Activated CD8-positive, alpha-beta T cell treated with anti-CD3 and anti-CD28 coated beads for 36 hours (primary cell): ENCODE measurements at regions of chr14 and their contacts with region 1.

Region 1: DNA sequence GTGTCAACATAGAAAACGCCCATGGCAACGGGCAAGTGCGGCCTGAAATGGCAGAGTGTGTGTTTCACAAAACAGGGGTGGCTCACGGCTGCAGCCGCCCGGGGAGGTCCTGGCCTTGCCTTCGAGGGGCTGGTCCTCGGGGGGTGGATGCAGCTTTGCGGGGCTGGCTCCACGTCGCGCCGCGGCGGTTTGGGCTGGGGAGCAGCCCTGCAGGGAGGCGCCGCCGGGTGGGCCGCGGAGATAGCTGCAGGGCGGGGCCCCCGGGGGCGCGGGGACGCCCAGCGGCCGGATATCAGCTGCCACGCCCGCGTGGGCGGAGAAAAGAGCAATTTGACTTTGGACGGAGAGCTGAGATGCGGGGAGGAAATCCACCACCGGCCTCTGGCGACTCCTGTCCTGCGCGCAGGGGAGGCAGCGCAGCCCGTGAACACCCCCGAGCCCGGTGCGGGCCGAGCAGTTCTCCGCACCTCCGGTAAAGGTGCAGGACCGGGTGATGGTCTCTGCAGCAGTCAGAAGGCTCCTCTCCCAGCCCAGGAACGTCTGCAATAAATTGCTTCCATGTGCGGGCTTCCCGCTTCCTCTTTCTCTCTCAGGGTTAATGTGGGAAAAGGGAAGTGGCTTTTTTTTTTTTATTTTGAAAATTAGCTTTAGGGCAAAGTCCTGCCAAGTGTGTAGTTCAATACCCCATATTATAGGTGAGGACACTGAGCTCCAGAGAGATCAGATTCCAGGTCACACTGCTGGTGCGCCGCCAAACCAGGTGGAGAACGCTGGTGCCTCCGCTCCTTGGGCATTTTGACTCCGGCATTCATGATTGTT is 110.5 kb downstream of the ARF6 start:
- DNase-seq: peak; percentile 92
- ATAC-seq: peak; percentile 10
- H3K4me3 Mint-ChIP-seq: peak overlapping the region; percentile 72
- H3K27ac Mint-ChIP-seq: peak overlapping the region; percentile 94
- H3K4me1 Mint-ChIP-seq: peaks cover 35% of the 10 kb centered on the region
- H3K27me3 Mint-ChIP-seq: no peaks in the 10 kb centered on the region
- CTCF ChIP-seq: no peak

Region 2: GRCh38 chr14:49867831-49868723 is 135.3 kb before region 1 on chr14:
- CTCF ChIA-PET with region 1: interaction called, 58 read pairs
- POLR2A ChIA-PET with region 1: interaction called, 42 read pairs
- intact Hi-C with region 1: loop called (anchors 10 kb)
- DNase-seq: peak; percentile 100
- ATAC-seq: peak; percentile 86
- H3K4me3 Mint-ChIP-seq: peak overlapping the region; percentile 97
- H3K27ac Mint-ChIP-seq: peak overlapping the region; percentile 98
- H3K4me1 Mint-ChIP-seq: peaks cover 28% of the 10 kb centered on the region
- H3K27me3 Mint-ChIP-seq: no peaks in the 10 kb centered on the region
- CTCF ChIP-seq: no peak

Region 3: DNA sequence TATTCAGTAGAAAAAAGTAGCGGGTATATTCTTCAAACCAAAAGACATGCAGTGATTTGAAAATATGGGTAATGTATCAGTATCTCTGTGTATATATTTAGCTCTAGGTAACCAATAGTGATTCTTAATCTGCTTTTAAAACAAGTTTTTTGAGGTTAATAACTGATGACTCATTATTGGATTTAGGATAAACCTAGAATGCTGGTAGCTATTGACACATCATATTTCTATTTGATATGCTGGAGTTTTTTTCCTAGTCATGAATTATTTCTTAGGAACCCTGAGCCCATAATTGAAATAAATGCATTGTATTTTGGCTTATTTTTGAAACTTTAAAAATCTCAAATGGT is 95.0 kb before region 1 on chr14:
- CTCF ChIA-PET with region 1: interaction called, 3 read pairs
- POLR2A ChIA-PET with region 1: interaction called, 18 read pairs
- intact Hi-C with region 1: no loop called
- DNase-seq: no peak
- ATAC-seq: no peak
- H3K4me3 Mint-ChIP-seq: no peak overlapping the region
- H3K27ac Mint-ChIP-seq: peak overlapping the region; percentile 88
- H3K4me1 Mint-ChIP-seq: peaks cover 43% of the 10 kb centered on the region
- H3K27me3 Mint-ChIP-seq: no peaks in the 10 kb centered on the region
- CTCF ChIP-seq: no peak

Region 4: DNA sequence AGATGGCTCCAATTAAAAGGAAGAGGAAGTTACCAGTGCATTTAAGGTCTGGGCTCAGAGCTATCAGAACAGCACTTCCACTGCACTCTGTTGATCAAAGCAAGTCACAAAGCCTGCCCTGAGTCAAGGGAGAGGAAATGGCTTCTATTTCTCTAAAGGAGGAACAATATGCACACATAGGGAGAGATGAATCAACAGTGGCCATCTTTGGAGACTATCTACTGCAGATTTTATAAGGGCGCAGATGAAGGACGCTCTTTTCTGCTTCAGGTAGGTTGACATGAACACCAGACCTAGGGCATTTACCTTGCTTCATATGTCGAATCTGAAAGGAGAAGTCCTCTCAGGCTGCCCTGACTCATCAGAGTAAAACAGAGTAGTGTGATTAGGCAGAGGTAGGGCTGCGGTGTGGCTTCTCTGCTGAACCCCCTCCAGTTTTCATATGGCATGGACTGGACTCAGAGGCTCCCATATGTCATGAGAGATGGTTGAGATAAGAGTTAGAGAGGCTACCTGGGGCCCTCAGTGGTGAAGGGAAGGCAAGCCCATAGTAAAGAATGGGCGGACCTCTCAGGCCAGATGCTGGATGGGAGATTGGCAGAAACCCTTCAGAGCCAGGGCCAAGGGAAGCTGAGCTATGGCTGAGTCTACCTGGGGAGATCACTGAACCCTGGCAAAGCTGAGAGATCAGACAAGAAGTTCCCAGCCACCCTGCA is 26.1 kb before region 1 on chr14:
- CTCF ChIA-PET with region 1: interaction called, 37 read pairs
- POLR2A ChIA-PET with region 1: interaction called, 135 read pairs
- intact Hi-C with region 1: loop called (anchors 1 kb)
- DNase-seq: peak; percentile 69
- ATAC-seq: peak; percentile 76
- H3K4me3 Mint-ChIP-seq: peak overlapping the region; percentile 35
- H3K27ac Mint-ChIP-seq: peak overlapping the region; percentile 91
- H3K4me1 Mint-ChIP-seq: peaks cover 84% of the 10 kb centered on the region
- H3K27me3 Mint-ChIP-seq: no peaks in the 10 kb centered on the region
- CTCF ChIP-seq: no peak

Region 5: DNA sequence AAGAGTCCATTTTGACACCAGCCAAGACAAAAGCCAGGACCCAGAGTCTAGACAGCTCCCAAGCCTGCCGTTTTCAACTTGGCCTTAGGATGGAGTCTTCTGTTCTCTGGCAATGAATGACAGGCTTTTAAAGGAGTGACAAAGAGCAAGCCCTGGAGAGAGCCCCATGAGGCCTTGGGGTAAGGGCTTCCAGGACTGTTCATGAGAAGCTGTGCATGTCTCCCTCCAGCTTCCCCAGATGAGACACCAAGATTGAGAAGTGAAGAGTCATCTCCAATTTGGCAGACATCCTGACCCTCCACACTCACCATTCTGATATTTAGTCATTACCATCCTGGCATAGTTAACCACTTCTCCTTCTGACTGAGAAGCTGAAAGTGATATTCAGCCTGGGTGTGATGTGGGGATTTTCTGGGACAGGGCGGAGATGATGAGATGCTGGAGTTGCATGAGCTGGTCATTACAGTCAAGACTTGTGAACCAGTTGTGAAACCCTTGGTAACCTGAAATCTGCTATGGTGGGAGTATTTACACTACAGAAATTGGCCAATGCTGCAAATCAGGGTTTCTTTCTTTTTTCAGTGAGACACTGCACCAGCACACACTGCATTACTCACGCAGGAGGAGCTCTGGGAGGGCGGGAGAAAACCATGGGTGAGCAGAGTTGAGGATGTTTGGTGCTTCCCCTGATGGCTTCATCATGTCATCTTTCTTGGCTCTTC is 35.1 kb after region 1 on chr14:
- CTCF ChIA-PET with region 1: interaction called, 19 read pairs
- POLR2A ChIA-PET with region 1: interaction called, 111 read pairs
- intact Hi-C with region 1: loop called (anchors 1 kb)
- DNase-seq: peak; percentile 90
- ATAC-seq: peak; percentile 84
- H3K4me3 Mint-ChIP-seq: peak overlapping the region; percentile 69
- H3K27ac Mint-ChIP-seq: peak overlapping the region; percentile 97
- H3K4me1 Mint-ChIP-seq: peaks cover 61% of the 10 kb centered on the region
- H3K27me3 Mint-ChIP-seq: no peaks in the 10 kb centered on the region
- CTCF ChIP-seq: no peak

Region 6: DNA sequence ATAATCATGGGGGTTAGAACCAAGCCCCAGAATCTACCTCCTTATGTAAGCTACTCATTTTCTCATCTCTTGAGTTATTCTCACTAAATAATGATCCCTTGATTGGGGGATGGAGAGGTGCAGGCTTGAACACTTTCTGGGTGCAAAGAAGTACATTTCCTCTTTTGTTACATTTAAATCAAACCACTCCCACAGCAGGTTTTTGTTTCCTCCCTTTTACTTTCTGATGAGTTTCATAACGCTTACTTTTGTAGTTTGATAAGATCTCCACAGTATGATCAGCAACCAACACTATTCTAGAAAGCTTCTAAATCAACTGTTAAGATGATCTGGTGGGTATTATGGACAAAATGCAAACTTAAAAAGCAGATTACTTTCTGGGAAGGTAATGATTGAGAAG is 92.5 kb after region 1 on chr14:
- CTCF ChIA-PET with region 1: interaction called, 3 read pairs
- POLR2A ChIA-PET with region 1: interaction called, 13 read pairs
- intact Hi-C with region 1: no loop called
- DNase-seq: no peak
- ATAC-seq: peak; percentile 60
- H3K4me3 Mint-ChIP-seq: peak overlapping the region; percentile 31
- H3K27ac Mint-ChIP-seq: peak overlapping the region; percentile 87
- H3K4me1 Mint-ChIP-seq: peaks cover 81% of the 10 kb centered on the region
- H3K27me3 Mint-ChIP-seq: no peaks in the 10 kb centered on the region
- CTCF ChIP-seq: no peak